CD8-positive, alpha-beta memory T cell (primary cell): ENCODE measurements at regions of chr17 and their contacts with region 1.

Region 1: DNA sequence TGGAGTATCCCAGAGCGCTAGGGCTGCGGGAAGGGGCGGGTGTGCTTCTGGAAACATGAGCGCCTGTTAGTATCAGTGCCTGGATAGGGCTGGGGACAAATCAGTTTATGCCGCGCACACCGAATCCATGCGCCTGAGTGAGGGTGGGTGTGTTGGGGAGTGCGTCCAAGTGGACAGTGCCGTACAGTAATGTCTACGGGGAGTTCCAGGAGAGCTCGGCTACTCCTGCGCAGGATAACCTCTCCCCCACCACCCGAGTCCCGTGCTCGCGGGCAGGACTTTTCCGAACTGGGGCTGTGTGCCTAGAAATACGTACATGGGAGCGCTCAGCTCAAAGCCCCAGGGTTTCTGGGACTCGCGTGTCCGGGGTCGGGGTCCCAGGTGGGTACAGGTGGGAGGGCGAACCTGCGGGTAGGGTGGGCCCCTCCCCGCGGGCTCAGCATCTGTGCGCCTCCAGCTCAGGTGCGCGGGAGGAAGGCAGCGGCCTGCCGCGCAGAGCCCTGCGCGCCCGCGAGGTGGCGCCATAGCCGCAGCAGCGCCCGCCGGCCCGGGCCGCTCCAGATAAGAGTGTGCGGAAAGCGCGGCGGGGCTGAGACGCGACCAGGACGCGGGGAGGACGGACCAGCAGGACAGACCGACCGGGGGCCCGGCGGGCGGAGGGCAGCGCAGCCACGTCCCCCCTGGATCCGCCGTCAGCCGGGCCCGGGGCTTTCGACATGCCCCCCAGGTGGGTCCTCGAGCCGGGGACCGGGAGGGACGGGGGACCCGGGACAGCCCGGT is at the start of gene HIC1:
- DNase-seq: peak; percentile 68 to 84 (median 79)
- H3K4me3 ChIP-seq: peak within 1 kb of the TSS; percentile 64
- H3K4me3 Mint-ChIP-seq: peak within 1 kb of the TSS; percentile 79 to 92 (median 83)
- H3K27ac ChIP-seq: peak within 1 kb of the TSS; percentile 85
- H3K27ac Mint-ChIP-seq: peak within 1 kb of the TSS; percentile 85 to 97 (median 90)
- H3K4me1 ChIP-seq: peaks cover 18% of the 10 kb centered on the region
- H3K4me1 Mint-ChIP-seq: peaks cover 17 to 38% (median 18%) of the 10 kb centered on the region in 3 donors
- H3K27me3 ChIP-seq: no peaks in the 10 kb centered on the region
- H3K27me3 Mint-ChIP-seq: peaks cover 0 to 3% of the 10 kb centered on the region in 2 donors
- total RNA-seq, gene HIC1: 39.5 to 42.7 TPM

Region 2: GRCh38 chr17:2081564-2081963 is 26.9 kb after region 1 on chr17:
- CTCF ChIA-PET with region 1: interaction called, 73 read pairs
- POLR2A ChIA-PET with region 1: interaction called, 4 read pairs
- DNase-seq: no peak
- H3K4me3 ChIP-seq: no peak overlapping the region
- H3K4me3 Mint-ChIP-seq: peak overlapping the region in 1 of 7 donors; percentile 19
- H3K27ac ChIP-seq: no peak overlapping the region
- H3K27ac Mint-ChIP-seq: peak overlapping the region in 7 of 8 donors; percentile 5 to 96 (median 72)
- H3K4me1 ChIP-seq: no peaks in the 10 kb centered on the region
- H3K4me1 Mint-ChIP-seq: peaks cover 9 to 52% (median 28%) of the 10 kb centered on the region in 3 donors
- H3K27me3 ChIP-seq: no peaks in the 10 kb centered on the region
- H3K27me3 Mint-ChIP-seq: no peaks in the 10 kb centered on the region

Region 3: GRCh38 chr17:2215616-2216364 is 161.1 kb after region 1 on chr17:
- CTCF ChIA-PET with region 1: interaction called, 11 read pairs
- POLR2A ChIA-PET with region 1: interaction called, 5 read pairs
- DNase-seq: peak; percentile 48 to 84 (median 74)
- H3K4me3 ChIP-seq: peak overlapping the region; percentile 42
- H3K4me3 Mint-ChIP-seq: peak overlapping the region; percentile 46 to 89 (median 78)
- H3K27ac ChIP-seq: peak overlapping the region; percentile 52
- H3K27ac Mint-ChIP-seq: peak overlapping the region; percentile 93 to 100 (median 96)
- H3K4me1 ChIP-seq: peaks cover 55% of the 10 kb centered on the region
- H3K4me1 Mint-ChIP-seq: peaks cover 50 to 64% (median 60%) of the 10 kb centered on the region in 3 donors
- H3K27me3 ChIP-seq: no peaks in the 10 kb centered on the region
- H3K27me3 Mint-ChIP-seq: no peaks in the 10 kb centered on the region

Region 4: GRCh38 chr17:2259769-2260536 is 205.3 kb after region 1 on chr17:
- CTCF ChIA-PET with region 1: interaction called, 154 read pairs
- POLR2A ChIA-PET with region 1: interaction called, 14 read pairs
- DNase-seq: peak; percentile 24 to 79 (median 54)
- H3K4me3 ChIP-seq: peak overlapping the region; percentile 33
- H3K4me3 Mint-ChIP-seq: peak overlapping the region; percentile 63 to 90 (median 79)
- H3K27ac ChIP-seq: peak overlapping the region; percentile 52
- H3K27ac Mint-ChIP-seq: peak overlapping the region; percentile 93 to 98 (median 97)
- H3K4me1 ChIP-seq: peaks cover 69% of the 10 kb centered on the region
- H3K4me1 Mint-ChIP-seq: peaks cover 60 to 75% (median 66%) of the 10 kb centered on the region in 3 donors
- H3K27me3 ChIP-seq: no peaks in the 10 kb centered on the region
- H3K27me3 Mint-ChIP-seq: no peaks in the 10 kb centered on the region

Region 5: GRCh38 chr17:2336215-2336851 is 281.6 kb after region 1 on chr17 and contains the start of gene TSR1:
- CTCF ChIA-PET with region 1: interaction called, 18 read pairs
- POLR2A ChIA-PET with region 1: interaction called, 4 read pairs
- DNase-seq: peak; percentile 84 to 92 (median 85)
- H3K4me3 ChIP-seq: peak within 1 kb of the TSS; percentile 98
- H3K4me3 Mint-ChIP-seq: peak within 1 kb of the TSS in 6 of 7 donors; percentile 93 to 99 (median 98)
- H3K27ac ChIP-seq: peak within 1 kb of the TSS; percentile 64
- H3K27ac Mint-ChIP-seq: peak within 1 kb of the TSS in 7 of 8 donors; percentile 89 to 98 (median 96)
- H3K4me1 ChIP-seq: peaks cover 20% of the 10 kb centered on the region
- H3K4me1 Mint-ChIP-seq: peaks cover 30 to 35% (median 31%) of the 10 kb centered on the region in 3 donors
- H3K27me3 ChIP-seq: no peaks in the 10 kb centered on the region
- H3K27me3 Mint-ChIP-seq: no peaks in the 10 kb centered on the region
- total RNA-seq, gene TSR1: 97.7 to 99.4 TPM